ENCODE measurements at regions of chr11 and their contacts with region 1.

Region 1: GRCh38 chr11:83193315-83194280 is at the start of gene ANKRD42:
- DNase-seq: peak; percentile 93 to 96 (median 94)
- ATAC-seq: peak; percentile 95 to 98 (median 98)
- H3K4me3 ChIP-seq: peak within 1 kb of the TSS; percentile 49 to 97 (median 84)
- H3K27ac ChIP-seq: peak within 1 kb of the TSS; percentile 58 to 96 (median 89)
- H3K4me1 ChIP-seq: peaks cover 0 to 40% (median 24%) of the 10 kb centered on the region in 12 donors
- H3K27me3 ChIP-seq: no peaks in the 10 kb centered on the region
- CTCF ChIP-seq: no peak
- POLR2A ChIP-seq: peak in 1 of 2 donors; percentile 60
- total RNA-seq, gene ANKRD42: 3.7 to 9.1 (median 6.0) TPM

Region 2: GRCh38 chr11:83124636-83125424 is 68.8 kb before region 1 on chr11:
- intact Hi-C with region 1: no loop called
- DNase-seq: no peak
- ATAC-seq: peak in 2 of 4 donors; percentile 32 to 69
- H3K4me3 ChIP-seq: no peak overlapping the region
- H3K27ac ChIP-seq: no peak overlapping the region
- H3K4me1 ChIP-seq: peaks cover 0 to 4% (median 0%) of the 10 kb centered on the region in 12 donors
- H3K27me3 ChIP-seq: no peaks in the 10 kb centered on the region
- CTCF ChIP-seq: no peak
- POLR2A ChIP-seq: no peak

Region 3: GRCh38 chr11:83249972-83250593 is 56.5 kb after region 1 on chr11:
- intact Hi-C with region 1: no loop called
- DNase-seq: no peak
- ATAC-seq: peak in 1 of 4 donors; percentile 56
- H3K4me3 ChIP-seq: no peak overlapping the region
- H3K27ac ChIP-seq: no peak overlapping the region
- H3K4me1 ChIP-seq: no peaks in the 10 kb centered on the region
- H3K27me3 ChIP-seq: no peaks in the 10 kb centered on the region
- CTCF ChIP-seq: peak; percentile 44 to 83 (median 65)
- POLR2A ChIP-seq: no peak

Region 4: DNA sequence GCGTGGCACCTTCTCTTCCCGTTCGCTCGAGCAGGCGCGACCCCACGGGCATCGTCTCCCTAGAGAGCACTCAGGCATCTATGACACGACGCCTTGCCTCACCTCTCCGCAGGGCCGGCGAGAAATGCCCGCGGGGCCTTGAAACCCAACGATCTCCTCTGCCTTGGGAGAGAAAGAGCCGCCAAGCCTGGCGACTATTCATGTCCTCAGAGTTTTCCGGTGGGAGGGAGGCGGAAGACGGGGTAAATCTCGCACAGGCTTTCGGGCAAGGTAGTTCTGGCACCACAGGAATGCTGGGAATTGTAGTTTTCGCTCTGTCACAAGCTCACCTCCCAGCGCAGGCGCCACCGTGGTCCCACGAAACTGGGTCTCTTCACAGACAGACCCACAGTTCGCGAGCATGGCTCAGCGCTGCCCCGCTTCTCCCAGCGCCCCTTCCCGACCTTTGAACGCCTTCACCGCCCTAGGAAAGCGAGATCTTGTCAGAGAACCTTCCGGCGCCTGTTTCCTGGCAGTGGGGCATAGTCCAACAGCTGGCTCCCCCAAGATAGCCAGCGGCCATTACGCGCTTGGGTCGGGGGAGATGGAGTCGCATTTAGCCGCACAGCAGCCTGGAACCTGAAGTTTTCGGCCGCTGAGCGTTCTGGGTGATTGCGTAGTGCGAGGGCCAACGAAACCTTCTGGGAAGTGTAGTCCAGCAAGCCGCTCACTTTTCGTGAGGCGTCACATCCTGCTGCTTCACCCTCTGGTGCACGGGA is 92.4 kb after region 1 on chr11 and contains the start of gene CCDC90B:
- intact Hi-C with region 1: loop called in 1 of 10 experiments (anchors 5 kb)
- DNase-seq: peak; percentile 95 to 98 (median 96)
- ATAC-seq: peak; percentile 98 to 99 (median 98)
- H3K4me3 ChIP-seq: peak within 1 kb of the TSS; percentile 29 to 99 (median 83)
- H3K27ac ChIP-seq: peak within 1 kb of the TSS; percentile 90 to 99 (median 98)
- H3K4me1 ChIP-seq: peaks cover 0 to 45% (median 26%) of the 10 kb centered on the region in 12 donors
- H3K27me3 ChIP-seq: no peaks in the 10 kb centered on the region
- CTCF ChIP-seq: peak in 3 of 12 donors; percentile 14 to 46 (median 29)
- POLR2A ChIP-seq: peak in 1 of 2 donors; percentile 84
- total RNA-seq, gene CCDC90B: 18.0 to 31.7 (median 26.7) TPM

Region 5: GRCh38 chr11:83364500-83365059 is 171.0 kb after region 1 on chr11:
- intact Hi-C with region 1: no loop called
- DNase-seq: no peak
- ATAC-seq: no peak
- H3K4me3 ChIP-seq: no peak overlapping the region
- H3K27ac ChIP-seq: no peak overlapping the region
- H3K4me1 ChIP-seq: no peaks in the 10 kb centered on the region
- H3K27me3 ChIP-seq: no peaks in the 10 kb centered on the region
- CTCF ChIP-seq: no peak
- POLR2A ChIP-seq: no peak